ENCODE measurements at regions of chr1 and their contacts with region 1.

Region 1: GRCh38 chr1:153903841-153904455 is 18.8 kb downstream of the GATAD2B start:
- DNase-seq: no peak
- ATAC-seq: no peak
- H3K4me3 Mint-ChIP-seq: no peak overlapping the region
- H3K27ac Mint-ChIP-seq: peak overlapping the region; percentile 12
- H3K4me1 Mint-ChIP-seq: peaks cover 41% of the 10 kb centered on the region
- H3K27me3 Mint-ChIP-seq: no peaks in the 10 kb centered on the region
- CTCF ChIP-seq: no peak

Region 2: GRCh38 chr1:153866045-153866850 is 37.7 kb before region 1 on chr1:
- CTCF ChIA-PET with region 1: no interaction called
- POLR2A ChIA-PET with region 1: no interaction called
- intact Hi-C with region 1: loop called (anchors 5 kb)
- DNase-seq: no peak
- ATAC-seq: no peak
- H3K4me3 Mint-ChIP-seq: no peak overlapping the region
- H3K27ac Mint-ChIP-seq: peak overlapping the region; percentile 16
- H3K4me1 Mint-ChIP-seq: peaks cover 30% of the 10 kb centered on the region
- H3K27me3 Mint-ChIP-seq: no peaks in the 10 kb centered on the region
- CTCF ChIP-seq: no peak

Region 3: DNA sequence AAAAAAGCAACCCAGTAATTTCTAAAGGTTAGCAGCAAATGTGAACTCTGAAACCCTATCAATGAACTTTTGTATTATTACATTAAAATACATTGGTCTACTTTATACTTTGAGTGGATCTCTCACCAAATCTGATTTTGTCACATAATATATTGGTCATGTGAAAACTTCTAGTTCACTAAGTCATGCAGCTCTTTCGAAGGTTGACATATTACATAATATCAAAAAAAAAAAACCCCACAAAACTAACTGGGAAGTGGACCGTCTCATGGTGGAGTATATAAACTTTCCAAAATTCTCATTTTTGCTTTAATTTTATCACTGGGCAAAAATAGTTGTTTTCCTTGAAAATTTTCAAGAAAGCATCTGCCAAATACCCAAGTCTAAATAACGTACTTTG is 31.6 kb before region 1 on chr1:
- CTCF ChIA-PET with region 1: no interaction called
- POLR2A ChIA-PET with region 1: interaction called, 11 read pairs
- intact Hi-C with region 1: loop called (anchors 5 kb)
- DNase-seq: no peak
- ATAC-seq: no peak
- H3K4me3 Mint-ChIP-seq: no peak overlapping the region
- H3K27ac Mint-ChIP-seq: no peak overlapping the region
- H3K4me1 Mint-ChIP-seq: peaks cover 25% of the 10 kb centered on the region
- H3K27me3 Mint-ChIP-seq: no peaks in the 10 kb centered on the region
- CTCF ChIP-seq: no peak

Measured in activated B cell treated with CpG ODN at 0.5 μM for 24 hours (primary cell).